A673 (cell line): ENCODE measurements at regions of chr1 and their contacts with region 1.

Region 1: DNA sequence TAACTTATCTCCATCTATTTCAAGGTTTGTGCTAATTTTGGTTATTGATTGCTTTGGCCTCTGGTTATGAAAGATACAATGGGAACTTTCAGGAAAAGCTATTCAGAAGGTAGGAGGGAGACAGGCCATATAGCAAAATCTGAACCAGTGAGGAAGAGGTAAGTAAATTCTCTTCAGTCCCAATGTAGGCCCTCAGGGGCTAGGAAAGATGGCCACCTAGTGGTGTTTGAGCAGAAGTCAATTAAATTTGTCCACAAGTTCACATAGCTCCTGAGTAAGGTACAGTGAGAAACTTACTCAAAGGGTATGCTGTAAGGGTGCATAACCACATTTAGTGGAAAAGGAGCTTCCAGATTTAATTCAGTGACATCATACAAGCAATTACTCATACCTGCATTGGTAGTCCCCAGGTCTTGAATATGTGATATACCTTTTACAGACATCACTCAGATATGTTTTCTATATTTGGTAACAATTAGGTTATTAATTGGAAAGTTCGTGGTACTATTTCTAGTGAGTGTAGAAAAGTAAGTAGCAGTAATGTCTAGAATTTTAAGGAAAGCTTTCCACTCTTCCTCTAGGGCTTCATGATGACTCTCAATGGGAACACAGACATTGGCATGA is 21.4 kb upstream of the FMO1 start:
- DNase-seq: peak; percentile 87
- H3K4me3 ChIP-seq: no peak overlapping the region
- H3K27ac ChIP-seq: no peak overlapping the region
- H3K4me1 ChIP-seq: peaks cover 18% of the 10 kb centered on the region
- H3K27me3 ChIP-seq: no peaks in the 10 kb centered on the region
- CTCF ChIP-seq: peak; percentile 84

Region 2: DNA sequence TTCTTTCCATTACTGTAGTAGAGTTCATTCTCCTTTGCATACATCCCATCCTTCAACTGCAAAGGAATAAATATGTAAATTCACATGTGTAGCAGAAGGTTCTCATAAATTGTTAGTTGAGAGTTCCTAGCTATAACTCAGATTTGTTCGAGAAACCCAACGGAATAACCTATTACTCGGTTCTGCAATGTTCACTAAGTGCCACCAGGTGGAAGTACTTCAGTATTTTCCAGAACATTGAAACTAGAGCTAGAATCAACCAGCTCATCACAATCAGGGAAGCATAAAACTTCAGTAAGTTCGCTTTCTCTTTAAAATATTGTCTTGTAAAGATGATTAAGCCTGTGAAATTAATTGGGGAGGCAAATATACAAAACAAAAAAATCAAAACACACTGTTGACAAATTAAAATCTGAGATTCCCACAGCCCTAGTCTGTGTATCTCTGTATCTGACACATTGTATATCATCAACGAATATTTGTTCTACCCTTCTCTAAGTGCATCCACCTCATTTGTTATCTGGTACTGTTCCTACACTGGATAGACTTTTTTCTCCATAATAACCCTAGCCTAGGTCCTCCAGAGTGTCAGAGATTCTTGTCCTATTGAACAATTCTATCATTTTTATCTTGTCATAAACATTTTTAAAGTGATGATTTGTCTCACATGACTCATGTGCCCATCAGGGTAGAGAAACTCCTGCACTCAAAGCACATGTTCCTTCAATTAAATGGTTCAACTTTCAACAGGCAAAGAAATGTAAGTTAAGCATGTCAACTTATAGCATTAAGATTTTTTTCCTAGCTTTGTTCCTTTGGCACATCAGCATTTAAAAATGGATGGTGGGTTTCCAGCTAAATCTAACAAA is 259.6 kb before region 1 on chr1:
- CTCF ChIA-PET with region 1: interaction called, 28 read pairs
- POLR2A ChIA-PET with region 1: no interaction called
- intact Hi-C with region 1: loop called (anchors 1 kb)
- DNase-seq: peak; percentile 59
- H3K4me3 ChIP-seq: no peak overlapping the region
- H3K27ac ChIP-seq: no peak overlapping the region
- H3K4me1 ChIP-seq: no peaks in the 10 kb centered on the region
- H3K27me3 ChIP-seq: no peaks in the 10 kb centered on the region
- CTCF ChIP-seq: peak; percentile 71

Region 3: DNA sequence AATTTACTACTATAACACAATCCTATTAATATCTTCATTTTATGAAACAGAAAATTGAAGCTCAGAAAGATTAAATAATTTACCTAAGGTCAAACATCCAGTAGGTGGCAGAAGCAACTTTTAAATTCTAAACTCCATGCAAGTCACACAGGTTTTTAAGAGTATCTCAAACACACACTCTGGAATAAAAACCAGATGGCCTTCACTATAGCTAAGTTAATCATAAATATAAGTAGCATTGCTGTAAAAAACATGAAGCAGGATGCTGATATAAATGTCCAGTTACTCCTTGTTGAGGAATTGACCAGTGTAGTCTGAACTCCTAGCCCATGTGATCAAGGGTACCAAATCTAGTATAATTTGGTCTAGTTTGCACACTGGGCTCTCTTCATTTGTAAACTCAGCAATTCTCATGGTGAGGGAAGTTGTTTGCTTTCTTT is 145.5 kb before region 1 on chr1:
- CTCF ChIA-PET with region 1: interaction called, 26 read pairs
- POLR2A ChIA-PET with region 1: no interaction called
- intact Hi-C with region 1: loop called (anchors 2 kb)
- DNase-seq: peak; percentile 53
- H3K4me3 ChIP-seq: no peak overlapping the region
- H3K27ac ChIP-seq: no peak overlapping the region
- H3K4me1 ChIP-seq: peaks cover 4% of the 10 kb centered on the region
- H3K27me3 ChIP-seq: no peaks in the 10 kb centered on the region
- CTCF ChIP-seq: peak; percentile 64

Region 4: GRCh38 chr1:171110621-171111326 is 116.1 kb before region 1 on chr1:
- CTCF ChIA-PET with region 1: no interaction called
- POLR2A ChIA-PET with region 1: no interaction called
- intact Hi-C with region 1: no loop called
- DNase-seq: peak; percentile 16
- H3K4me3 ChIP-seq: no peak overlapping the region
- H3K27ac ChIP-seq: no peak overlapping the region
- H3K4me1 ChIP-seq: no peaks in the 10 kb centered on the region
- H3K27me3 ChIP-seq: peaks cover 3% of the 10 kb centered on the region
- CTCF ChIP-seq: no peak

Region 5: GRCh38 chr1:171152549-171152948 is 74.3 kb before region 1 on chr1:
- CTCF ChIA-PET with region 1: no interaction called
- POLR2A ChIA-PET with region 1: no interaction called
- intact Hi-C with region 1: no loop called
- DNase-seq: peak; percentile 34
- H3K4me3 ChIP-seq: no peak overlapping the region
- H3K27ac ChIP-seq: no peak overlapping the region
- H3K4me1 ChIP-seq: no peaks in the 10 kb centered on the region
- H3K27me3 ChIP-seq: no peaks in the 10 kb centered on the region
- CTCF ChIP-seq: no peak

Region 6: DNA sequence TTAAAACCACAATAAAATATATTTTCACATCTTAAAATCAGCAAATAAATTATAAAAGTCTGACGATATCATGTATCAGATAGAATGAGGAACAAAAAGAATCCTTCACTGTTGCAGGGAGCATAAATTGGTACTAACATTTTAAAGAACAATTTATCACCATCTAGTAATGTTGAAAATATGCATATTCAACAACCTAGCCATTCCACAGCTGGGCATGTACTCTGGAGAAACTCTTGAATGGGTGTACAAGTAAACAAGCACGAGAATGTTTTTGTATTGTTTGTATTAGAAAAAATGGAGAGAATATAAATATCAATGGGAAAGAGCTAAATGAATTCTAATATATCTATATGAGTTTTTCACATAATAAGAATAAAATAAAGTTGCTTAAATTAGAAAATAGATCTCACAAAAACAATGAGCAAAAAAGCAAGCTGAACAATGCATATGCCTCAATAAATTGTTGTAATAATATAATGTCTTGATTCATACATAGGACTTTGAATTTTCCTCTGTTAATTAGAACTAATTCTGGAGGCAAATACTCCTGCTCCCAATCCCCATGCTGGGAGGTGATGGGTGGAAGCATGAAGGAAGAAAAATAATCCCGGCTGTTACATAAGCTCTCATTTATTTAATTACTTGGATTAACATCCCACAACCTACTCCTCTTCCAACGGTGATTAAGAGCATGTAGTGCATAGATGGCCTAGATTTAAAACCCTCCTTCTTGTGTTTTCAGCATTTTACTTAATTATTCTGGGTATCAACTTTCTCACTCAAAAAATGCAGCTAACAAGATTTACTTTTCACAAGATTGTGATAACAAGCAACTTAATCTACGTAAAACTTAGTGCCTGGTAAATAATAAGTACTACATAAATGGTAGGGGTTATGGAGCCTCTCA is 47.3 kb before region 1 on chr1:
- CTCF ChIA-PET with region 1: interaction called, 5 read pairs
- POLR2A ChIA-PET with region 1: no interaction called
- intact Hi-C with region 1: loop called (anchors 5 kb)
- DNase-seq: peak; percentile 40
- H3K4me3 ChIP-seq: no peak overlapping the region
- H3K27ac ChIP-seq: peak overlapping the region; percentile 65
- H3K4me1 ChIP-seq: peaks cover 32% of the 10 kb centered on the region
- H3K27me3 ChIP-seq: no peaks in the 10 kb centered on the region
- CTCF ChIP-seq: no peak